ENCODE measurements at regions of chr15 and their contacts with region 1.

Region 1: DNA sequence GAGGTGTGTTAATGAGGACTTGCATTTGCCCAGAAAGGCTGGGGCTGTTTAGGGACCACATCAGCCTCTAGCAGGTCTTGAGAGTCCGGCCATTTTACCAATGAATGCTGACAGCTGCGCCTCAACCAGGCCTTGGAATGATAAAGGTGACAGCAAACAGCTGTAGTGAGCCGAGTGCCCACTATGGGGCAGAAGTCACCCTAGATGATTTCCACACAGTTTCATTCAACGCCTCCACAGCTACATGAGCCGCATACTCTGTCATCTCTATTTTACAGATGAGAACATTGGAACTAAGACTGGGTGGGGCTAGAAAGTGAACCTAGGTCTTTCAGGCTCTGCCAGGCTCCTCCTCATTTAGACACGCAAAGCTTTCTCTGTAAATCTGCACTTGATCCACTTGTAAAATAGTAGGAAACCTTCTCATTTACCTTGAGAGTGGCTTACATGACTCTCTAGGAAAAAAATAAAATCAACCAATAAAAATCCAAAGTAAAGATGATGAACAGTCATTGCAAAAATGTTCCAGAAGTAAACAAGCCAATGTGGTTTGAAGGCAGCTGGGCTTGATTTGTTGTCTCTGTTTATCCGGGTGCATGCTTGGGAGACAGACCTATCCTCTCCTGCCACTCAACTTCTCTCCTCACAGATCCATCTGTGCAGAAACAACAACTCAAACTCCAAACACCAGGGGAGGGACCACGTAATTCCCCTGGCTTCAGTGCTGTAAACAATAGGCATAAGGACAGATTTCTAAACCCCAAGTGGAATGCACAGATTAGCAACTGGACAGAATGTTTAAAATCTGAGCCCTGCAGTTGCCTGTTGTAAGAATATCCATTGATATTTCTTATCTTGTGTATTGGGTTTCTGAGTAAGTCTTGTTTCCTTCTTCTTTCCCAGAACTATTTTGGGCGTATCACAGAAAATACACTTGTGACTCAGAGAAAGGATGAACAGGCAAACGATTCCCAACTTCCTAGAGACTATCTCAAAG is 31.5 kb upstream of the LDHAL6B start:
- DNase-seq: peak; percentile 84 to 87
- ATAC-seq: peak; percentile 88 to 89
- H3K4me3 ChIP-seq: no peak overlapping the region
- H3K27ac ChIP-seq: peak overlapping the region; percentile 63 to 74
- H3K4me1 ChIP-seq: peaks cover 36% of the 10 kb centered on the region
- CTCF ChIP-seq: peak; percentile 82
- EP300 ChIP-seq: no peak
- POLR2A ChIP-seq: no peak
- RAD21 ChIP-seq: peak; percentile 85 to 86

Region 2: GRCh38 chr15:59160880-59161593 is 14.1 kb before region 1 on chr15:
- CTCF ChIA-PET with region 1: interaction called, 13 read pairs
- POLR2A ChIA-PET with region 1: no interaction called
- DNase-seq: peak; percentile 41 to 59
- ATAC-seq: peak; percentile 81 to 84
- H3K4me3 ChIP-seq: no peak overlapping the region
- H3K27ac ChIP-seq: peak overlapping the region in 1 of 2 experiments; percentile 22; a peak in 1 of 6 replicates
- H3K4me1 ChIP-seq: peaks cover 6% of the 10 kb centered on the region
- CTCF ChIP-seq: peak; percentile 62
- EP300 ChIP-seq: no peak
- POLR2A ChIP-seq: no peak
- RAD21 ChIP-seq: peak; percentile 76 to 87

Region 3: GRCh38 chr15:59185725-59186124 is 10.6 kb after region 1 on chr15:
- CTCF ChIA-PET with region 1: interaction called, 17 read pairs
- POLR2A ChIA-PET with region 1: no interaction called
- DNase-seq: peak in 1 of 2 experiments; percentile 36
- ATAC-seq: peak in 1 of 2 experiments; percentile 31; a peak in 3 of 6 replicates
- H3K4me3 ChIP-seq: no peak overlapping the region
- H3K27ac ChIP-seq: peak overlapping the region in 1 of 2 experiments; percentile 54; a peak in 3 of 6 replicates
- H3K4me1 ChIP-seq: peaks cover 17% of the 10 kb centered on the region
- CTCF ChIP-seq: peak; percentile 16; the same call in 1 of the 3 replicates
- EP300 ChIP-seq: no peak
- POLR2A ChIP-seq: no peak
- RAD21 ChIP-seq: no peak; a peak in 1 of 5 replicates

Region 4: DNA sequence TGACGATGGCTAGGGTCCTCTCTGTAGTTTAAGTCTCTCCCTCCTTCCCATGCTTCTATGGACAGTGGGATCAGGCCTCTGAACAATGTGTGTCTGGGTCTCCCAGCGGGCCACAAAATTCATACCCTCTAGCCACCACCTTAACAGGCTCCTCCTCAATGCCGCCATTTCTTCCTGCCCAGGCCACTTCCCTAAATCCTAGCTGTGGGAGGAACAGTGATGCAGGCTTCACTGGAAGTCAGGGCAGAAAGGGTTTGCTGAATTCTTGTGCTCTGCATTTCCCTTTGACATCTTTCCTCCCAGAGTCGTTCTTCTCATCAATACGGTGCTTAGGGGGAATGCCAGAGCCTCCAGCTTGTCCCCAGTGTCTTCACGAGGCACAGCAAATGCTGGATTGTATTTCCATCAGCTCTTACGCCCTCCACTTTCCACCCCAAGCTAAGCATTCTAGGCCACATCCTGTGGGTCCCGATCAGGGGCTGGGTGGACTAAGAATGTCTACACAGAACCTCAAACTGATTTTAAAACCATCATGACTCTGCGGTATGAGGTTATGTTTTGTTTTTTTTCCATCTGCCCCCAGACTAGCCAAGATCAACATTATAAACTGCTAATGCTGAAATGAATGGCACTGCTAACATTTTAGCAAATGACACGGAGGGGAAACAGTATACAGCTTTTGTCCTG is 19.6 kb after region 1 on chr15:
- CTCF ChIA-PET with region 1: interaction called, 10 read pairs
- POLR2A ChIA-PET with region 1: interaction called, 4 read pairs
- DNase-seq: no peak
- ATAC-seq: no peak
- H3K4me3 ChIP-seq: no peak overlapping the region
- H3K27ac ChIP-seq: peak overlapping the region in 1 of 2 experiments; percentile 91; a peak in 3 of 6 replicates
- H3K4me1 ChIP-seq: peaks cover 60% of the 10 kb centered on the region
- CTCF ChIP-seq: no peak
- EP300 ChIP-seq: no peak
- POLR2A ChIP-seq: no peak
- RAD21 ChIP-seq: no peak

Measured in A549 (cell line).